GM12878 (cell line): ENCODE measurements at regions of chr11 and their contacts with region 1.

Region 1: GRCh38 chr11:65314501-65315203 is at the start of gene CDC42EP2:
- DNase-seq: no peak
- ATAC-seq: peak; percentile 97
- H3K4me3 ChIP-seq: peak within 1 kb of the TSS; percentile 95
- H3K27ac ChIP-seq: no peak within 1 kb of the TSS
- H3K4me1 ChIP-seq: no peaks in the 10 kb centered on the region
- H3K27me3 ChIP-seq: peaks cover 0 to 1% of the 10 kb centered on the region in 2 experiments; a peak in 2 of 4 replicates
- CTCF ChIP-seq: no peak
- EP300 ChIP-seq: no peak
- POLR2A ChIP-seq: no peak
- RAD21 ChIP-seq: no peak
- polyA plus RNA-seq, gene CDC42EP2: 0.07 TPM in 1 of 2 experiments, not detected in the other

Region 2: DNA sequence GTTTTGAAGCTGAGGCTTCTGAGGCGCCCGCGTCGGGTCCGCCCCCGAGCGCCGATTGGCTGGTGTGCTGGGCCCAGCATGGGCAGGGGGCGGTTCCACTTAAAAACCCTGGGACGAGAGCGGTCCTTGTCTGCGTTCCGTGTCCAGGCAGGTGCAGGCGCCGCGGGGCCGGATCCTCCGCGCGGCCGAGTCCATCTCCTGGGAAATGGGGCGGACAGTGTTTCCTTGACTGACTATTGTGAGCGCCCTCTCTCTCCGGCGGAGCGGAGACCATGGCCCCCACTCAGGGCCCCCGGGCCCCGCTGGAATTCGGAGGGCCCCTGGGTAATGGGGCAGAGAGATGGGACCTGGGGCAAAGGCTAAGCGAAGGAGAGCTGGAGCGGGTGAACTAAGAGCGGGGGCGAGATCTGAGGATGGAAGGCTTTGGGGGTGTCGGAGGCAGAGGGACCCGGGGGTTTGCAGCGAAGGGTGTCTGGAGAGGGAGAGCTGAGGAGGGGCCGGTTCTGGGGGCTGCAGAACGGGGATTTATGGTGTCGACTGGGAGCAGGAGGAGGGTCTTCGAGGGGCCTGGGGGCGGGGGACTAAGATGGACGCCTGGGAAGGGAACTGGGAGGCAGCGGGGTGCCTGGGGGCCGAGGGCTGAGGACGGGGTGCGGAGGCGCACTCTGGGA is 202.8 kb before region 1 on chr11 and contains the start of gene TM7SF2:
- CTCF ChIA-PET with region 1: interaction called, 8 read pairs
- POLR2A ChIA-PET with region 1: no interaction called
- RAD21 ChIA-PET with region 1: interaction called, 11 read pairs
- SMC1A ChIA-PET with region 1: no interaction called
- in situ Hi-C with region 1: no loop called
- intact Hi-C with region 1: no loop called
- DNase-seq: no peak
- ATAC-seq: peak; percentile 89
- H3K4me3 ChIP-seq: peak within 1 kb of the TSS; percentile 85
- H3K27ac ChIP-seq: peak within 1 kb of the TSS; percentile 14
- H3K4me1 ChIP-seq: peaks cover 24% of the 10 kb centered on the region
- H3K27me3 ChIP-seq: no peaks in the 10 kb centered on the region
- CTCF ChIP-seq: no peak
- EP300 ChIP-seq: no peak
- POLR2A ChIP-seq: peak; percentile 97
- RAD21 ChIP-seq: no peak
- polyA plus RNA-seq, gene TM7SF2: 0.52 to 2.9 TPM

Region 3: GRCh38 chr11:65219930-65220213 is 94.8 kb before region 1 on chr11:
- CTCF ChIA-PET with region 1: interaction called, 96 read pairs
- POLR2A ChIA-PET with region 1: interaction called, 5 read pairs
- RAD21 ChIA-PET with region 1: interaction called, 21 read pairs
- SMC1A ChIA-PET with region 1: interaction called, 30 read pairs
- in situ Hi-C with region 1: no loop called
- intact Hi-C with region 1: loop called (anchors 2 kb)
- DNase-seq: no peak
- ATAC-seq: no peak
- H3K4me3 ChIP-seq: no peak overlapping the region
- H3K27ac ChIP-seq: no peak overlapping the region
- H3K4me1 ChIP-seq: no peaks in the 10 kb centered on the region
- H3K27me3 ChIP-seq: no peaks in the 10 kb centered on the region; a peak in 1 of 4 replicates
- CTCF ChIP-seq: no peak
- EP300 ChIP-seq: no peak
- POLR2A ChIP-seq: no peak
- RAD21 ChIP-seq: no peak

Region 4: GRCh38 chr11:65261591-65262380 is 52.9 kb before region 1 on chr11 and contains the start of gene POLA2:
- CTCF ChIA-PET with region 1: interaction called, 28 read pairs
- POLR2A ChIA-PET with region 1: interaction called, 5 read pairs
- RAD21 ChIA-PET with region 1: interaction called, 5 read pairs
- SMC1A ChIA-PET with region 1: interaction called, 8 read pairs
- in situ Hi-C with region 1: no loop called
- intact Hi-C with region 1: no loop called
- DNase-seq: peak; percentile 92
- ATAC-seq: peak; percentile 93
- H3K4me3 ChIP-seq: peak within 1 kb of the TSS; percentile 92
- H3K27ac ChIP-seq: peak within 1 kb of the TSS; percentile 98
- H3K4me1 ChIP-seq: peaks cover 3% of the 10 kb centered on the region
- H3K27me3 ChIP-seq: no peaks in the 10 kb centered on the region
- CTCF ChIP-seq: no peak
- EP300 ChIP-seq: no peak
- POLR2A ChIP-seq: peak; percentile 94
- RAD21 ChIP-seq: no peak
- polyA plus RNA-seq, gene POLA2: 4.2 to 8.7 TPM

Region 5: DNA sequence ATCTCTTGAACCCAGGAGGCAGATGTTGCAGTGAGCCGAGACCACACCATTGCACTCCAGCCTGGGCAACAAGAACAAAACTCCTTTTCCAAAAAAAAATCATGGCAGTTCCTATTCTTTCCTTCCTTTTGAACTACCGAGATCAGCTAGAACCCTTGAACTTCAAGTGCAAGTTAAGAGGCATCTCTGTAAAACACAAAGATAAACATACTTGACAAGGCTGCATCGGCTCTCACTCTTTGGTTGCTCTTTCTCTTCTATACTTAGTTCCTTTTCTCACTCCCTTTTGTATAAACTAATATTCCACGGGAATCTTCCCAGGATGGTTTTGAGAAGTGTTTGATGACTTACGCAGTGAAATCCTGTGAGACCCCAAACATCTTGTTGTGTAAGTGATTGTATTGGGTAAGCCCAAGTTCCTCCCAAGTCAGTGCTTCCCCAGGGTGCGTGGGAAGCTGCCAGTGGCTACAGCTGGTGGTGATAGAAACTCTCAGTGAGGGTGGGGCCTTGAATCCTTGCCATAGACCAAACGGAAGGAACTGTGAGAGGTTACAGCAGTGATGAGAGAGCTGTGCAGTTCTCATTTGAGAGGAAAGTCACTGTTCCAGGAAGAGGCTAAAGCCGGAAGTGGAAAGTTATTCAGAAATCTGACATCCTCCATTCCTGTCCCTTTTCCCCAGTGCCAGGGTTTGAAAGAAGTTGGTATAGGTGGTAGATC is 24.0 kb before region 1 on chr11:
- CTCF ChIA-PET with region 1: interaction called, 37 read pairs
- POLR2A ChIA-PET with region 1: no interaction called
- RAD21 ChIA-PET with region 1: interaction called, 7 read pairs
- SMC1A ChIA-PET with region 1: interaction called, 6 read pairs
- in situ Hi-C with region 1: no loop called
- intact Hi-C with region 1: no loop called
- DNase-seq: peak; percentile 69
- ATAC-seq: peak; percentile 95
- H3K4me3 ChIP-seq: no peak overlapping the region
- H3K27ac ChIP-seq: peak overlapping the region; percentile 87
- H3K4me1 ChIP-seq: peaks cover 16% of the 10 kb centered on the region
- H3K27me3 ChIP-seq: no peaks in the 10 kb centered on the region
- CTCF ChIP-seq: no peak
- EP300 ChIP-seq: no peak
- POLR2A ChIP-seq: no peak
- RAD21 ChIP-seq: no peak

Region 6: GRCh38 chr11:65512306-65512705 is 197.7 kb after region 1 on chr11:
- CTCF ChIA-PET with region 1: interaction called, 3 read pairs
- POLR2A ChIA-PET with region 1: no interaction called
- RAD21 ChIA-PET with region 1: interaction called, 4 read pairs
- SMC1A ChIA-PET with region 1: interaction called, 4 read pairs
- in situ Hi-C with region 1: no loop called
- intact Hi-C with region 1: loop called (anchors 5 kb)
- DNase-seq: no peak
- ATAC-seq: no peak
- H3K4me3 ChIP-seq: no peak overlapping the region
- H3K27ac ChIP-seq: no peak overlapping the region
- H3K4me1 ChIP-seq: 0 out of 2 replicates have a peak, but pooled peaks cover 3% of the 10 kb centered on the region
- H3K27me3 ChIP-seq: no peaks in the 10 kb centered on the region; a peak in 1 of 4 replicates
- CTCF ChIP-seq: no peak
- EP300 ChIP-seq: no peak
- POLR2A ChIP-seq: no peak
- RAD21 ChIP-seq: no peak

Region 7: GRCh38 chr11:65540297-65541092 is 225.8 kb after region 1 on chr11:
- CTCF ChIA-PET with region 1: no interaction called
- POLR2A ChIA-PET with region 1: no interaction called
- RAD21 ChIA-PET with region 1: no interaction called
- SMC1A ChIA-PET with region 1: no interaction called
- in situ Hi-C with region 1: no loop called
- intact Hi-C with region 1: no loop called
- DNase-seq: peak; percentile 71
- ATAC-seq: peak; percentile 95
- H3K4me3 ChIP-seq: peak overlapping the region; percentile 72
- H3K27ac ChIP-seq: peak overlapping the region; percentile 61
- H3K4me1 ChIP-seq: peaks cover 6% of the 10 kb centered on the region
- H3K27me3 ChIP-seq: no peaks in the 10 kb centered on the region
- CTCF ChIP-seq: peak; percentile 82 to 91 (median 82)
- EP300 ChIP-seq: no peak
- POLR2A ChIP-seq: peak; percentile 81
- RAD21 ChIP-seq: peak; percentile 74